ENCODE measurements at regions of chr5 and their contacts with region 1.

Region 1: GRCh38 chr5:136212252-136212721 is 19.3 kb upstream of the SMIM32 start:
- DNase-seq: peak; percentile 77
- H3K4me3 ChIP-seq: no peak overlapping the region
- H3K27ac ChIP-seq: no peak overlapping the region
- H3K4me1 ChIP-seq: no peaks in the 10 kb centered on the region
- H3K27me3 ChIP-seq: no peaks in the 10 kb centered on the region
- CTCF ChIP-seq: peak; percentile 85

Region 2: DNA sequence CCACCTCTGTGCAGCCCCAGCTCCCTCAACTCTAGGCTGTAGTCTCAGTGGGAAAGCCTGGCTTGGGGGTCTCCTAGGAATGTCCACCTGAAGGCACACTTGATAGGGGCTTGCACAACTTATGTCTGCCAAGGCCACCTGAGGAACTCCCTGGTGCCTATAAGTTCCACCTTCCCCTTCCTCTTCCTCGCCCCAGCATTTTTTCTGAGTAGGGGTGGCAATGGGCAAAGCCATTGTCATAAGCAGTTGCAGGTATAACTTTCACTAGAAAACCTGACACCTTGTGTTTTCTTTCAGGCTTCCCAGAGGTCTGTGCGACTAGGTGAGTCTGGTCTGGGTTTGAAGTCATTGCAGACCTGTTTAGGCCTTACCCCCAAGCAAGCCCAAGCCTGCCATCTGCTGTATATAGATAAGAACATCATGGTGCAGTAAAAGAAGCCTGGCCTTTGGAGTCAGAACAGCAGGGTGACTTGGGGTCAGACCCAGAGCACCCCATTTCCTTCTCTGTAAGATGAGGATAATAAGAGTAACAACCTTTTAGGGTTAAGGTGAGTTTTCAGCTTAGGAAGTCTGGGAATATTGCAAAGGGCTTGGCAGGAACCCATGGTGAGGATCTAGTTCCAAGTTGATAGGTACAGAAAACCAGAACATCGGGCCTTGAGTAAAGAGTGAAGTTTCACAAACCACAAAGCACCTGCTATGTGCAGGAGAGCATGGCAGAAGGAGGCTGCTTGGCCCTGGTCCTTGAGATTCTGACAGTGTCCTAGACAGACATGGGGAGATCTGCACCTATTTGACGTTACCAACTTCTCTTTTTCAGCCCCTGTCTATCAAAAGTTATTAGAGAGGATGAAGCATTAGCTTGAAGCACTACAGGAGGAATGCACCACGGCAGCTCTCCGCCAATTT is 149.7 kb before region 1 on chr5:
- intact Hi-C with region 1: loop called (anchors 5 kb)
- DNase-seq: no peak
- H3K4me3 ChIP-seq: no peak overlapping the region
- H3K27ac ChIP-seq: no peak overlapping the region
- H3K4me1 ChIP-seq: no peaks in the 10 kb centered on the region
- H3K27me3 ChIP-seq: no peaks in the 10 kb centered on the region
- CTCF ChIP-seq: peak; percentile 47

Measured in colonic mucosa (tissue), 4 donors.